ENCODE measurements at regions of chr13 and their contacts with region 1.

Region 1: DNA sequence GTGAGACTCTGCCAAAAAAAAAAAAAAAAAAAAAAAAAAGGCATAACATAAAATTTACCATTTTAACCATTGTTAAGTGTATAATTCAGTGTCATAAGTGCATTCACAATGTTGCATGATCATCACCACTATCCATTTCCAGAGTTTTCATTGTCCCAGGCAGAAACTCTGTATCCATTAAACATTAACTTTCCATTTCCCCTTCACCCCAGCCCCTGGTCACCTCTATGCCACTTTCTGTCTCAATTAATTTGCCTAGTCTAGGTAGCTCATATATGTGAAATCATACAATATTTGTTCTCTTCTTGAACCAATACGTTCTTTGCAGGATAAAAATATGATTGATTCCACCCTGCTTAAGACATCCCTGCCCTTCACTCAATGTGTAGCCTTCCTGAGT is 31.0 kb upstream of the VWA8 start:
- DNase-seq: no peak
- ATAC-seq: no peak
- H3K4me3 ChIP-seq: no peak overlapping the region
- H3K4me3 Mint-ChIP-seq: no peak overlapping the region
- H3K27ac ChIP-seq: no peak overlapping the region
- H3K27ac Mint-ChIP-seq: no peak overlapping the region
- H3K4me1 ChIP-seq: no peaks in the 10 kb centered on the region
- H3K4me1 Mint-ChIP-seq: no peaks in the 10 kb centered on the region
- H3K27me3 ChIP-seq: no peaks in the 10 kb centered on the region
- H3K27me3 Mint-ChIP-seq: peaks cover 3% of the 10 kb centered on the region
- CTCF ChIP-seq: no peak

Region 2: GRCh38 chr13:41937388-41937787 is 54.5 kb before region 1 on chr13:
- CTCF ChIA-PET with region 1: no interaction called
- POLR2A ChIA-PET with region 1: no interaction called
- intact Hi-C with region 1: loop called in 1 of 2 experiments (anchors 2 kb)
- DNase-seq: no peak
- ATAC-seq: no peak
- H3K4me3 ChIP-seq: no peak overlapping the region
- H3K4me3 Mint-ChIP-seq: no peak overlapping the region
- H3K27ac ChIP-seq: no peak overlapping the region
- H3K27ac Mint-ChIP-seq: no peak overlapping the region
- H3K4me1 ChIP-seq: no peaks in the 10 kb centered on the region
- H3K4me1 Mint-ChIP-seq: peaks cover 36% of the 10 kb centered on the region
- H3K27me3 ChIP-seq: no peaks in the 10 kb centered on the region
- H3K27me3 Mint-ChIP-seq: no peaks in the 10 kb centered on the region
- CTCF ChIP-seq: no peak

Region 3: DNA sequence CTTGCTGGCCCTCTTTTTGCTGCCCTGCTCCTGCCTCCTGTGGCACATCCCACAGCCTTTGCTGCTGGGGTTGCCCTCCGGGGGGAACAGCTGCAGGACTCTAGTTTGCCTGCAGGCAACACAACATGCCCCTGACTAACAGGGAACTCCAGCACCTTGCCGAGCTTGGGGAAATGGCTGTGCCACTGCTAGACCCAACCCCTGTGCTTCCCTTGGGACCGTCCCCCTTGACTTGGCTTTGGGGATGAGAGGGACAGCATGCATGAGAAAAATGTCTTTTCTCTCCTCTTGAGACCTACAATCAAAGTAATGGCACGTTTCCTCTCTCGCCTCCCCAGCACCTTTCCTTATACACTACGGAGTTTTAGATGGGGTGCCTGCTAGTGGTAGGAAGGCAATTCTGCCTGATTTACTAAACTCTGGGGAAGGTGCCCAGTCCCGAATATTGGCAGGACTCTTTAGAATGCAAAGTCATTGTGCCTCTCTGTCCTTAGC is 18.6 kb before region 1 on chr13:
- CTCF ChIA-PET with region 1: no interaction called
- POLR2A ChIA-PET with region 1: no interaction called
- intact Hi-C with region 1: loop called in 1 of 2 experiments (anchors 2 kb)
- DNase-seq: no peak
- ATAC-seq: no peak
- H3K4me3 ChIP-seq: no peak overlapping the region
- H3K4me3 Mint-ChIP-seq: no peak overlapping the region
- H3K27ac ChIP-seq: no peak overlapping the region
- H3K27ac Mint-ChIP-seq: no peak overlapping the region
- H3K4me1 ChIP-seq: no peaks in the 10 kb centered on the region
- H3K4me1 Mint-ChIP-seq: peaks cover 16% of the 10 kb centered on the region
- H3K27me3 ChIP-seq: no peaks in the 10 kb centered on the region
- H3K27me3 Mint-ChIP-seq: no peaks in the 10 kb centered on the region
- CTCF ChIP-seq: no peak

Region 4: DNA sequence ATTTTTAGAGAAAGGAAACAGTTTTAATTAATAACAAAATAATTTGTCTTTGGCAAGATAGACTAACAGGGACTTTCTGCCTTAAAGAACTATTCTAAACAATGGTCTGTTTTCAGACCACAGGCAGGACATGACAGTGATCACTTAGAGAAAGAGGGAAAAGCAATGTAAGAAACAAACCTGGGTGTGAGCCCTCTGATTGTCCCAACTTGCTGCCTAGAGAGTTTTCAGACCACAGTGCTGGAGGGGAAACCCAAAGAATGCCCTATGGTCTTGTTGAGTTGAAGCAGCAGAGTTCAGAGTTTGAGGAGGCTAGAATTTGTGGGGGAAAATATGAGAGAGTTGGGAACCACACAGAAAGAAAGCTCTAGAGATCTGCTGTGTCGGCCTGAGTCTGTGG is 94.6 kb after region 1 on chr13:
- CTCF ChIA-PET with region 1: no interaction called
- POLR2A ChIA-PET with region 1: no interaction called
- intact Hi-C with region 1: no loop called
- DNase-seq: no peak
- ATAC-seq: no peak
- H3K4me3 ChIP-seq: no peak overlapping the region
- H3K4me3 Mint-ChIP-seq: no peak overlapping the region
- H3K27ac ChIP-seq: no peak overlapping the region
- H3K27ac Mint-ChIP-seq: no peak overlapping the region
- H3K4me1 ChIP-seq: no peaks in the 10 kb centered on the region
- H3K4me1 Mint-ChIP-seq: peaks cover 3% of the 10 kb centered on the region
- H3K27me3 ChIP-seq: no peaks in the 10 kb centered on the region
- H3K27me3 Mint-ChIP-seq: no peaks in the 10 kb centered on the region
- CTCF ChIP-seq: no peak